GM12878 (cell line): ENCODE measurements at regions of chr16 and their contacts with region 1.

Region 1: DNA sequence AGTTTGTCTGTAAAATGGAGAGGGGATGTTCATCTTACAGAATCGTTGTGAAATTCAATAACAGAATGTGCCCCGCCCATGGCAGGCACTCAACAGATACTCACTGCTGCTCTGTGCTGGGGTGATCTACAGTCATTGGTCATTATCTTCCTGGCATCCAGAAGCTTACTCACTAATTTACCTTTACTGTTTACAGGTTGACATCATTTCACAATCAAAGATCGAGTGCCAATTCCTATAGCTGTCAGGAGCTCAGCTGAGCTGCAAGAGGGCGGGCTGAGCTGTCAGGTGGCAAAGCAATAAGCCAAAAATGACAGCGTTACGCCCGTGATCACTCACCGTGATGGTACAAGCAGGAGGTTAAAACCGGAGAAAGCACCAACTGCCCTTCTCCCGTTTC is 51.2 kb downstream of the LITAF start:
- DNase-seq: no peak
- ATAC-seq: no peak
- H3K4me3 ChIP-seq: no peak overlapping the region
- H3K27ac ChIP-seq: no peak overlapping the region
- H3K4me1 ChIP-seq: no peaks in the 10 kb centered on the region
- H3K27me3 ChIP-seq: no peaks in the 10 kb centered on the region; a peak in 1 of 4 replicates
- CTCF ChIP-seq: no peak
- EP300 ChIP-seq: no peak
- POLR2A ChIP-seq: no peak
- RAD21 ChIP-seq: no peak

Region 2: DNA sequence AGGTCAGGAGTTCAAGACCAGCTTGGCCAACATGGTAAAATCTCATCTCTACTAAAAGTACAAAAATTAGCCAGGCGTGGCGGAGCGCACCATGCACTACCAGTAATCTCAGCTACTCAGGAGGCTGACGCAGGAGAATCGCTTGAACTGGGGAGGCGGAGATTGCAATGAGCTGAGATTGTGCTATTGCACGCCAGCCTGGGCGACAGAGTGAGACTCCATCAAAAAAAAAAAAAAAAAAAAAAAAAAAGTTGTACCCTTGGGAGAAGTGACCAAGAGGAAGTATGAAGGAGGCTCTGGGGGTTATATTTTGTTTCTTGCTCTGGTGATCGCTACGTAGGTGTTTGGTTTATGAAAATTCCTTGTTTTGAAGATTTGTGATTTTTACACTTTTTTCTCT is 15.0 kb before region 1 on chr16:
- CTCF ChIA-PET with region 1: interaction called, 10 read pairs
- POLR2A ChIA-PET with region 1: no interaction called
- RAD21 ChIA-PET with region 1: no interaction called
- SMC1A ChIA-PET with region 1: no interaction called
- in situ Hi-C with region 1: no loop called
- intact Hi-C with region 1: no loop called
- DNase-seq: no peak
- ATAC-seq: no peak
- H3K4me3 ChIP-seq: no peak overlapping the region
- H3K27ac ChIP-seq: no peak overlapping the region
- H3K4me1 ChIP-seq: no peaks in the 10 kb centered on the region
- H3K27me3 ChIP-seq: no peaks in the 10 kb centered on the region
- CTCF ChIP-seq: no peak
- EP300 ChIP-seq: no peak
- POLR2A ChIP-seq: no peak
- RAD21 ChIP-seq: no peak

Region 3: DNA sequence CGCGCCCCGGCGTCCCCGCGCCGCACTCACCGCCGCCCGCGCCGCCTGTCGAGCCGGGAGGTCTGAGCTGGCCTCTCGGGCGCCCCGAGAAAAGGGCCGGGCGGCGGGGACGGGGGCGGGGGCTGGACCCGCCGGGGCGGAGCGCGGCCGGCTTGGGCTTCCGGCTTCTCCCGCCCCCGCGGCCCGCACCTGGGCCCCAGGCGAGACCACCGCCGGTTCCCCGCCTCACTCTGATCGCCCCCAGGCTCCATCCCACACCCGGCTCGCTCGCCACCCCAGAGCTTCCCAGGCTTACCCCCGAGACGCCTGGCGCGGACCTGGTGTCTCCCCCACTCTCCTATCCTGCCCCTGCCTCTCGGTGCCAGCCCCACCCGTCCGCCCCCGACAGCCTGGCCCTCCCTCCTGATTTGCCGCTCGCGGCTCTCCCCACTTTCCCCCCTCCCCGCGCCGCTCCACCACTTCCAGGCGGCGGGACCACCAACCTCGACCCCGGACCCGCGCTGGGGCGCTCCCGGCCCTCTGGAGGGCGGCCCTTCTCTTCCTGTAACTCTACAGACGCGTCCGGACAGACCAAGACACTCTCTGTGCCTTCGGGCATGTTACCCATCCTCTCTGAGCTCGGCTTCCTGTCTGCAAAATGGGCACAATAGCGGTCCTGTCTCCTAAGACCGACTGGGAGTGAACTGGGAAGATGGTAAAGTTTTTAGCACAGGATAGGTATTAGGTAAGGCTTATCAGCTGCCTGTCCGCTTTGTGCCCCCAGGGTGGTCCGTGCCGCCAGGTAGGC is 51.6 kb after region 1 on chr16 and contains the start of gene LITAF:
- CTCF ChIA-PET with region 1: interaction called, 22 read pairs
- POLR2A ChIA-PET with region 1: no interaction called
- RAD21 ChIA-PET with region 1: interaction called, 6 read pairs
- SMC1A ChIA-PET with region 1: interaction called, 18 read pairs
- in situ Hi-C with region 1: no loop called
- intact Hi-C with region 1: loop called (anchors 5 kb)
- DNase-seq: no peak
- ATAC-seq: peak; percentile 78
- H3K4me3 ChIP-seq: peak within 1 kb of the TSS; percentile 97
- H3K27ac ChIP-seq: peak within 1 kb of the TSS; percentile 92
- H3K4me1 ChIP-seq: peaks cover 10% of the 10 kb centered on the region; the same call in 1 of the 2 replicates
- H3K27me3 ChIP-seq: no peaks in the 10 kb centered on the region
- CTCF ChIP-seq: peak in 1 of 3 experiments; percentile 19; a peak in 1 of 6 replicates
- EP300 ChIP-seq: no peak
- POLR2A ChIP-seq: peak; percentile 81
- RAD21 ChIP-seq: peak; percentile 33; the same call in 1 of the 2 replicates
- polyA plus RNA-seq, gene LITAF: 144 to 195 TPM

Region 4: GRCh38 chr16:11632464-11632939 is 97.0 kb after region 1 on chr16:
- CTCF ChIA-PET with region 1: interaction called, 26 read pairs
- POLR2A ChIA-PET with region 1: no interaction called
- RAD21 ChIA-PET with region 1: interaction called, 15 read pairs
- SMC1A ChIA-PET with region 1: interaction called, 25 read pairs
- in situ Hi-C with region 1: no loop called
- intact Hi-C with region 1: no loop called
- DNase-seq: no peak
- ATAC-seq: no peak
- H3K4me3 ChIP-seq: no peak overlapping the region
- H3K27ac ChIP-seq: no peak overlapping the region
- H3K4me1 ChIP-seq: peaks cover 8% of the 10 kb centered on the region
- H3K27me3 ChIP-seq: no peaks in the 10 kb centered on the region; a peak in 1 of 4 replicates
- CTCF ChIP-seq: no peak
- EP300 ChIP-seq: no peak
- POLR2A ChIP-seq: no peak
- RAD21 ChIP-seq: no peak

Region 5: DNA sequence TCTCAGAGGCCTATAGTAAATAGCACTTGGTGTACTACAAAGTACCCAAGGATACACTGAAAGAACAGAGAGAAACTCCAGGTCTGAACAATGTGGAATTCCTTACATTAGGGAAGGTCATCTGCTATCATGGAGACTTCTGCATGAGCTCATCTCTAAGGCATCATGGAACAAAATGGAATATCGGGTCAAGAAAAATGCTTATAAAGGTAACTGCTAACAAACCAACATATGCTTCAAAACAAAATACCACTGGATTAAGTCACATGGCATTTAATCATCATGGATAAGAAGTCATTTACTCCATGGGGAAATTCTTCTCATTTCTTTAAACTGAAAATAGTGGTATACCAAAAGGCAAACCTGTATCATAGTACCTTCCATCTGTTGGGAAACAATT is 172.9 kb after region 1 on chr16:
- CTCF ChIA-PET with region 1: interaction called, 3 read pairs
- POLR2A ChIA-PET with region 1: no interaction called
- RAD21 ChIA-PET with region 1: interaction called, 3 read pairs
- SMC1A ChIA-PET with region 1: interaction called, 7 read pairs
- in situ Hi-C with region 1: loop called (anchors 5 kb)
- intact Hi-C with region 1: no loop called
- DNase-seq: no peak
- ATAC-seq: no peak
- H3K4me3 ChIP-seq: no peak overlapping the region
- H3K27ac ChIP-seq: no peak overlapping the region
- H3K4me1 ChIP-seq: no peaks in the 10 kb centered on the region; the same call in 1 of the 2 replicates
- H3K27me3 ChIP-seq: no peaks in the 10 kb centered on the region
- CTCF ChIP-seq: no peak
- EP300 ChIP-seq: no peak
- POLR2A ChIP-seq: no peak
- RAD21 ChIP-seq: no peak